Gastrocnemius medialis (tissue), 4 donors: ENCODE measurements at regions of chr10 and their contacts with region 1.

Region 1: DNA sequence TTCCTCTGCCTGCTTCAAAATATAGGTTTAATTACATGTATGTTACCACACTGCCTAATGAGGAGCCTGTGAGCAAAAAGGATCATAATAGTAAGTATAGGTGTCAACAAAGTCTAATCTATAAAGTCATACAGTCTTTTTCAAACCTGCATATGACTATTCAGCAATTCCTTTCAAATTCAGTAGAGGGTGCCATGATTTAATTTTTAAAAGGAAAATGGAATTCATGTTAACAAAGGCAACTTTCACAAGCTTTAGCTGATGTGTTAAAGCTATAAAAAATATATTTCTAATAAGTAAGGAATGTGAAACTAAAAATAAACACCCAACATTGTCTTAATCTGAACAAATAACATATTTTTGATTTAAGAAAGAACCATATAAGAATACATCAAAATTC is 52.1 kb downstream of the MPP7 start:
- DNase-seq: no peak
- ATAC-seq: peak; percentile 55 to 61
- H3K4me3 ChIP-seq: no peak overlapping the region
- H3K27ac ChIP-seq: no peak overlapping the region
- H3K4me1 ChIP-seq: peaks cover 3 to 15% of the 10 kb centered on the region in 2 donors
- H3K27me3 ChIP-seq: no peaks in the 10 kb centered on the region
- CTCF ChIP-seq: peak; percentile 17 to 68 (median 54)
- POLR2A ChIP-seq: no peak

Region 2: GRCh38 chr10:28179006-28179742 is 71.6 kb before region 1 on chr10:
- in situ Hi-C with region 1: no loop called
- intact Hi-C with region 1: no loop called
- DNase-seq: no peak
- ATAC-seq: peak in 1 of 2 donors; percentile 56
- H3K4me3 ChIP-seq: no peak overlapping the region
- H3K27ac ChIP-seq: no peak overlapping the region
- H3K4me1 ChIP-seq: peaks cover 9 to 13% of the 10 kb centered on the region in 2 donors
- H3K27me3 ChIP-seq: no peaks in the 10 kb centered on the region
- CTCF ChIP-seq: peak; percentile 44 to 80 (median 71)
- POLR2A ChIP-seq: no peak

Region 3: GRCh38 chr10:28302638-28303488 is 52.1 kb after region 1 on chr10 and contains the start of gene MPP7:
- in situ Hi-C with region 1: no loop called
- intact Hi-C with region 1: loop called (anchors 2 kb)
- DNase-seq: peak; percentile 95 to 98
- ATAC-seq: peak; percentile 99 to 100
- H3K4me3 ChIP-seq: peak within 1 kb of the TSS; percentile 71 to 87 (median 82)
- H3K27ac ChIP-seq: peak within 1 kb of the TSS; percentile 81 to 95 (median 91)
- H3K4me1 ChIP-seq: peaks cover 16 to 23% of the 10 kb centered on the region in 2 donors
- H3K27me3 ChIP-seq: no peaks in the 10 kb centered on the region
- CTCF ChIP-seq: peak; percentile 29 to 72 (median 43)
- POLR2A ChIP-seq: peak; percentile 31 to 62
- total RNA-seq, gene MPP7: 3.8 to 10.7 (median 6.4) TPM

Region 4: GRCh38 chr10:28375399-28376369 is 124.9 kb after region 1 on chr10:
- in situ Hi-C with region 1: loop called (anchors 5 kb)
- intact Hi-C with region 1: no loop called
- DNase-seq: no peak
- ATAC-seq: no peak
- H3K4me3 ChIP-seq: no peak overlapping the region
- H3K27ac ChIP-seq: no peak overlapping the region
- H3K4me1 ChIP-seq: no peaks in the 10 kb centered on the region
- H3K27me3 ChIP-seq: no peaks in the 10 kb centered on the region
- CTCF ChIP-seq: no peak
- POLR2A ChIP-seq: no peak

Region 5: DNA sequence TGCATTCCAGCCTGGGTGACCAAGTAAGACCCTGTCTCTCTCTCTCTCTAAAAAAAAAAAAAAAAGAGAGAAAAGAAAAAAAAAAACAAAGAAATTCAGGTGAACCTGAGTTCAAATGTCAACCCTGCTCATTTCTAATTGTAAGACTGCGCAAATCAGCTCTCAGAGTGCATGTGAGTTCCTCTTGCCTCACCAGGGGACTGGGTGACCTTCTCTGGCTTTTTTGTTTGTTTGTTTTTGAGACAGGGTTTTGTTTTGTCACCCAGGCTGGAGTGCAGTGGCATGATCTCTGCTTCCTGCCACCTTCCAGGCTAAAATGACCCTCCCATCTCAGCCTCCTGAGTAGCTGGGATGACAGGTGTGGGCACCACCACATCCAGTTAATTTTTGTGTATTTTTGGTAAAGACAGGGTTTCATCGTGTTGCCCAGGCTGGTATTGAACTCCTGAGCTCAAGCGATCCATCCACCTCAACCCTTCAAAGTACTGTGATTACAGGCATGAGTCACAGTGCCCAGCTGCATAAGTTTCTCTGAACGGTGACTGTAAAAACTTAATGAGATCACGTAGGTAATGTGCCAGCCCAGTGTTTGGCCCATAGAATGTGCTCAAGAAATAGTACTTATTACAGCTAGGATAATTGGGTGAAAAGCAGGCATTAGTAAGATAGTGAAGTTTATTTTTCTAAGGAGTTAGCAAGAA is 381.3 kb after region 1 on chr10:
- in situ Hi-C with region 1: no loop called
- intact Hi-C with region 1: no loop called
- DNase-seq: no peak
- ATAC-seq: no peak
- H3K4me3 ChIP-seq: no peak overlapping the region
- H3K27ac ChIP-seq: no peak overlapping the region
- H3K4me1 ChIP-seq: no peaks in the 10 kb centered on the region
- H3K27me3 ChIP-seq: no peaks in the 10 kb centered on the region
- CTCF ChIP-seq: no peak
- POLR2A ChIP-seq: no peak